ENCODE measurements at regions of chr15 and their contacts with region 1.

Region 1: GRCh38 chr15:55613727-55614126 is 25.6 kb upstream of the PYGO1 start:
- DNase-seq: no peak
- H3K4me3 ChIP-seq: no peak overlapping the region
- H3K27ac ChIP-seq: no peak overlapping the region
- H3K4me1 ChIP-seq: no peaks in the 10 kb centered on the region
- CTCF ChIP-seq: no peak

Region 2: GRCh38 chr15:55637086-55637485 is 23.4 kb after region 1 on chr15:
- CTCF ChIA-PET with region 1: no interaction called
- POLR2A ChIA-PET with region 1: no interaction called
- intact Hi-C with region 1: no loop called
- DNase-seq: no peak
- H3K4me3 ChIP-seq: no peak overlapping the region
- H3K27ac ChIP-seq: no peak overlapping the region
- H3K4me1 ChIP-seq: no peaks in the 10 kb centered on the region
- CTCF ChIP-seq: no peak

Region 3: GRCh38 chr15:55823191-55823670 is 209.5 kb after region 1 on chr15:
- CTCF ChIA-PET with region 1: interaction called, 22 read pairs
- POLR2A ChIA-PET with region 1: no interaction called
- intact Hi-C with region 1: no loop called
- DNase-seq: no peak
- H3K4me3 ChIP-seq: no peak overlapping the region
- H3K27ac ChIP-seq: no peak overlapping the region
- H3K4me1 ChIP-seq: no peaks in the 10 kb centered on the region
- CTCF ChIP-seq: no peak

Measured in OCI-LY7 (cell line).